ENCODE measurements at regions of chr4 and their contacts with region 1.

Region 1: GRCh38 chr4:138870737-138871554 is 144.6 kb upstream of the NOCT start:
- DNase-seq: peak; percentile 62 to 78
- H3K4me3 ChIP-seq: no peak overlapping the region
- H3K4me3 Mint-ChIP-seq: no peak overlapping the region
- H3K27ac Mint-ChIP-seq: no peak overlapping the region
- H3K4me1 ChIP-seq: peaks cover 11% of the 10 kb centered on the region
- H3K4me1 Mint-ChIP-seq: peaks cover 7% of the 10 kb centered on the region
- H3K27me3 ChIP-seq: no peaks in the 10 kb centered on the region
- H3K27me3 Mint-ChIP-seq: no peaks in the 10 kb centered on the region
- CTCF ChIP-seq: peak; percentile 70 to 80

Region 2: GRCh38 chr4:138035781-138036258 is 835.1 kb before region 1 on chr4:
- CTCF ChIA-PET with region 1: interaction called, 3 read pairs
- POLR2A ChIA-PET with region 1: no interaction called
- intact Hi-C with region 1: loop called (anchors 2 kb)
- DNase-seq: peak in 1 of 2 experiments; percentile 56
- H3K4me3 ChIP-seq: no peak overlapping the region
- H3K4me3 Mint-ChIP-seq: no peak overlapping the region
- H3K27ac Mint-ChIP-seq: no peak overlapping the region
- H3K4me1 ChIP-seq: no peaks in the 10 kb centered on the region
- H3K4me1 Mint-ChIP-seq: peaks cover under 1% of the 10 kb centered on the region
- H3K27me3 ChIP-seq: no peaks in the 10 kb centered on the region
- H3K27me3 Mint-ChIP-seq: no peaks in the 10 kb centered on the region
- CTCF ChIP-seq: peak; percentile 58 to 67

Region 3: GRCh38 chr4:138188406-138189084 is 682.4 kb before region 1 on chr4:
- CTCF ChIA-PET with region 1: no interaction called
- POLR2A ChIA-PET with region 1: no interaction called
- intact Hi-C with region 1: loop called (anchors 5 kb)
- DNase-seq: no peak
- H3K4me3 ChIP-seq: no peak overlapping the region
- H3K4me3 Mint-ChIP-seq: no peak overlapping the region
- H3K27ac Mint-ChIP-seq: no peak overlapping the region
- H3K4me1 ChIP-seq: no peaks in the 10 kb centered on the region
- H3K4me1 Mint-ChIP-seq: no peaks in the 10 kb centered on the region
- H3K27me3 ChIP-seq: no peaks in the 10 kb centered on the region
- H3K27me3 Mint-ChIP-seq: no peaks in the 10 kb centered on the region
- CTCF ChIP-seq: no peak

Region 4: DNA sequence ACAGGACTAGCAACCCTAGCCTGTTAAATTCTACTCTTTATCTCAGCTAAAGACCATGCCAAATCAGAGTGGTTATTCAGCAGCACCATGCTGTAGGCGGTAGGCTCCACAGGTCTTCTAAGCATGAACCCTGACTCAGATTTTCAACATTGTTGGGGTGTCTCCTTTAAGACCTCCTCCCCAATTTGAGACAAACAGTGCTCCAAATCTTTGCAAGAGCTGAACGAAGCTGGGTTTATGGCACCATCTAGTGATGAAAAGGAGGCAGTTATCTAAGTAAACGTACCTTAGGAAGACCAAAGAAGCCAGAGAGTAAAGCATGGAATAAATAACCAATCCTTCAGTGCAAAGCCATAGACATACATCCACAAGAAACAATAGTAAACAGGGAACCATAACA is 294.3 kb before region 1 on chr4:
- CTCF ChIA-PET with region 1: interaction called, 18 read pairs
- POLR2A ChIA-PET with region 1: no interaction called
- intact Hi-C with region 1: loop called (anchors 1 kb)
- DNase-seq: peak in 1 of 2 experiments; percentile 33
- H3K4me3 ChIP-seq: no peak overlapping the region
- H3K4me3 Mint-ChIP-seq: no peak overlapping the region
- H3K27ac Mint-ChIP-seq: no peak overlapping the region
- H3K4me1 ChIP-seq: no peaks in the 10 kb centered on the region
- H3K4me1 Mint-ChIP-seq: no peaks in the 10 kb centered on the region
- H3K27me3 ChIP-seq: no peaks in the 10 kb centered on the region
- H3K27me3 Mint-ChIP-seq: no peaks in the 10 kb centered on the region
- CTCF ChIP-seq: peak; percentile 47 to 63

Region 5: GRCh38 chr4:138757432-138757831 is 113.5 kb before region 1 on chr4:
- CTCF ChIA-PET with region 1: no interaction called
- POLR2A ChIA-PET with region 1: no interaction called
- intact Hi-C with region 1: loop called (anchors 2 kb)
- DNase-seq: no peak
- H3K4me3 ChIP-seq: no peak overlapping the region
- H3K4me3 Mint-ChIP-seq: no peak overlapping the region
- H3K27ac Mint-ChIP-seq: no peak overlapping the region
- H3K4me1 ChIP-seq: peaks cover 26% of the 10 kb centered on the region
- H3K4me1 Mint-ChIP-seq: peaks cover 18% of the 10 kb centered on the region
- H3K27me3 ChIP-seq: no peaks in the 10 kb centered on the region
- H3K27me3 Mint-ChIP-seq: no peaks in the 10 kb centered on the region
- CTCF ChIP-seq: no peak

Region 6: DNA sequence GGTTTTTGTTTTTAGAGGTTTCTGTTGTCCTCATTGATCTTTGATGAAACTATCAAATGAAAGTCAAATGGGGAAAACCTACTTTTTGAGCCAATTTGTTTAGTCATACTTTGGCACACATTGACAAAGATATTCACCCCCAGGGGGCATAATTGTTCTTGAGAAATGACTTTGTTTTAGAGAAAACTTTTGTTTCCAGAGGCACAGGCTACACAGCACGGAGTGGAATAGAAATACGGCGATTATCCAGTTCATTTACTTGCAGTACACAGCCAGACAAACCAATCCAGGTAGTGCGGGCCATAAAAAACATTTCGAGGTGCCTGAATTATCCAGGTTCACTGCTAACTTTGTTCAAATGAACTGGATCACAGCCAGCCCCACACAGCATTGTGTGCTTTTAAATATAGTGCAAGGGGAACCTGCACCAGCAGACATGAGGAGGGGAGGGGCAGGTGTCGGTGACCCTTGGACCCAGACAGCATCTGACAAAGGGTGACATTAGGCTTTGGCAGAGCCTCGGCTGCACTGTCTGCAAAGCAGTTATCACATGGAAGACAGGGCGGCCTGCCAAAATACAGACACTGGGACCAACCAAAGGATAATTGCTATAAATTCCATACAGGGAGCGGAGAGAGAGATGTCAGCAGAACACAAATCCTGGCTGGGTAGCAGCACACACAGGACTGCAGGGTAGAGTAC is 35.0 kb before region 1 on chr4:
- CTCF ChIA-PET with region 1: interaction called, 3 read pairs
- POLR2A ChIA-PET with region 1: no interaction called
- intact Hi-C with region 1: loop called (anchors 1 kb)
- DNase-seq: peak; percentile 59
- H3K4me3 ChIP-seq: no peak overlapping the region
- H3K4me3 Mint-ChIP-seq: no peak overlapping the region
- H3K27ac Mint-ChIP-seq: peak overlapping the region; percentile 33
- H3K4me1 ChIP-seq: peaks cover 9% of the 10 kb centered on the region
- H3K4me1 Mint-ChIP-seq: peaks cover 7% of the 10 kb centered on the region
- H3K27me3 ChIP-seq: no peaks in the 10 kb centered on the region
- H3K27me3 Mint-ChIP-seq: no peaks in the 10 kb centered on the region
- CTCF ChIP-seq: no peak